ENCODE measurements at regions of chr18 and their contacts with region 1.

Region 1: GRCh38 chr18:59697236-59697932 is at the start of gene CCBE1:
- DNase-seq: no peak
- H3K4me3 ChIP-seq: peak within 1 kb of the TSS; percentile 95
- H3K27ac ChIP-seq: peak within 1 kb of the TSS; percentile 25
- H3K27me3 ChIP-seq: no peaks in the 10 kb centered on the region
- CTCF ChIP-seq: peak; percentile 96
- polyA plus RNA-seq, gene CCBE1: 40.4 and 51.5 TPM in 2 replicates

Region 2: GRCh38 chr18:59459369-59460079 is 237.9 kb before region 1 on chr18:
- CTCF ChIA-PET with region 1: interaction called, 77 read pairs
- POLR2A ChIA-PET with region 1: interaction called, 3 read pairs
- DNase-seq: peak; percentile 33
- H3K4me3 ChIP-seq: no peak overlapping the region
- H3K27ac ChIP-seq: peak overlapping the region; percentile 39
- H3K27me3 ChIP-seq: no peaks in the 10 kb centered on the region
- CTCF ChIP-seq: peak; percentile 60

Region 3: GRCh38 chr18:59623456-59624368 is 73.7 kb before region 1 on chr18:
- CTCF ChIA-PET with region 1: interaction called, 14 read pairs
- POLR2A ChIA-PET with region 1: no interaction called
- DNase-seq: no peak
- H3K4me3 ChIP-seq: no peak overlapping the region
- H3K27ac ChIP-seq: peak overlapping the region; percentile 49
- H3K27me3 ChIP-seq: no peaks in the 10 kb centered on the region
- CTCF ChIP-seq: no peak

Region 4: DNA sequence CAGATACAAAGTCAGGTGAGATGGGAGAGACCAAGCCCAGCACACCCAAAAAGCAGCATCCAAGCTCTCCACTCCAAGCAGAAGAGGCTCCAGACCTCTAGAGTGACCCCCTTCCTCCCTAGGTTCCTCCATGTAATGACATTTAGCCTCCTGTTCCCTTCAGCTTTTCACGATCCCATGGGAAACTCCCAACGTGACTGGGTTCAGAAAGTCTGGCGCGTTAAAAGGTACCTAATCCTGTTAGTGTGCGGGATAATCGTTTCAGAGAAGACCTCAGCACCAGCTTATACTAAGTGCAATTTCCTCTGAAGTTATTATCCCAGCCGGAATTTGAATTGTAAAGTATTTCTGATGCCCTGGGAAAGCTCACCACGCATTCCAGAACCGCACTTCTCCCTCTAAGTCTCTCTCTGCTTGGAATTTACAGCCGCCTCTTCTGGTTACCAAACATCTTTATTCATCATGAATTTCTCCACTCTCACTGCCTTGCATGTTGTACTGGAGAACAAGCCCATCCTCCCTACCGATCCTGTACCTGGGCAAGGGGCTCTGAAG is 47.0 kb before region 1 on chr18:
- CTCF ChIA-PET with region 1: interaction called, 24 read pairs
- POLR2A ChIA-PET with region 1: no interaction called
- DNase-seq: no peak
- H3K4me3 ChIP-seq: no peak overlapping the region
- H3K27ac ChIP-seq: no peak overlapping the region
- H3K27me3 ChIP-seq: no peaks in the 10 kb centered on the region
- CTCF ChIP-seq: no peak

Region 5: GRCh38 chr18:59672235-59672711 is 25.1 kb before region 1 on chr18:
- CTCF ChIA-PET with region 1: interaction called, 28 read pairs
- POLR2A ChIA-PET with region 1: interaction called, 4 read pairs
- DNase-seq: no peak
- H3K4me3 ChIP-seq: no peak overlapping the region
- H3K27ac ChIP-seq: no peak overlapping the region
- H3K27me3 ChIP-seq: no peaks in the 10 kb centered on the region
- CTCF ChIP-seq: no peak

Region 6: DNA sequence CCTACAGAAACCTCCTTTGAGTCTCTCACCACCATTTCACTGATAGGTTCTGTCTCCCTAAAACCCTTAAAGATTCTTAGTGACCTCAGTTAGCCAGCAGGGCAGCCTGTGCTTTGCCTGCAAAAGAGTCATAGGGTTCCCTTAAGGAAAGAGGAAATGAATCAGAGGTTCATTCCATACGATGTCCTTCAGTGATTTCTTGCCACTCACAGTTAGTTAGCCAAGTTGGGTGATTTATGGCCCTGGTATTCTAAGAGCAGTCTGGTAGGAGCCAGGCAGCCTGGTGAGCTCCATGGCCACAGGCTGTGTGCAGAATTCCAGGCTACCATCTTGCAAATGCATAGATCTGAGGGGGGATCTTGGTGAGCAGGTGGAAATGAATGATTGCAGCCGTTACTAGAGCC is 18.6 kb after region 1 on chr18:
- CTCF ChIA-PET with region 1: interaction called, 18 read pairs
- POLR2A ChIA-PET with region 1: interaction called, 11 read pairs
- DNase-seq: peak; percentile 65
- H3K4me3 ChIP-seq: no peak overlapping the region
- H3K27ac ChIP-seq: peak overlapping the region; percentile 84
- H3K27me3 ChIP-seq: no peaks in the 10 kb centered on the region
- CTCF ChIP-seq: peak; percentile 31; the same call in 1 of the 2 replicates

Region 7: DNA sequence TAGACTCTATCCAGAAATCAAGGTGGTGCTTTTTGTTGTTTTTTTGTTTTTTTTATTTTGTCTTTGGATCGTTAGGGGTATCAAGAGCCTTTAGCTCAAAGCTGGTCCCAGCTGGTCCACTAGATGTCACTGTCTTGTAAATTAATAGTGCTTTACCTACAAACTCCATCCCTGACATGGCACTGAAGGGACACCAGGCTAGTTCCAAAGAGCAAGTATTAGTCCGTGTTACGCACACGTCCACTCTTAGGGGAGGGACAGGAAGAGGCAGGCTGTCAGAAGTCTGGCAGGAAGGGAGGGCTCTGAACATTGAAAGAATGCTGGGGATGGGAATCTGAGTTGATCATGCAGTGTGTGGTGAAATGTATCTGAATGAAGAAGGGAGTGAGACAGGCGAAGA is 85.8 kb after region 1 on chr18:
- CTCF ChIA-PET with region 1: interaction called, 22 read pairs
- POLR2A ChIA-PET with region 1: no interaction called
- DNase-seq: no peak
- H3K4me3 ChIP-seq: no peak overlapping the region
- H3K27ac ChIP-seq: no peak overlapping the region
- H3K27me3 ChIP-seq: no peaks in the 10 kb centered on the region
- CTCF ChIP-seq: peak; percentile 65

Region 8: GRCh38 chr18:60182223-60182622 is 484.8 kb after region 1 on chr18:
- CTCF ChIA-PET with region 1: no interaction called
- POLR2A ChIA-PET with region 1: no interaction called
- DNase-seq: no peak
- H3K4me3 ChIP-seq: no peak overlapping the region
- H3K27ac ChIP-seq: no peak overlapping the region
- H3K27me3 ChIP-seq: no peaks in the 10 kb centered on the region
- CTCF ChIP-seq: no peak

Measured in AG04450 (cell line).